Common myeloid progenitor, CD34-positive (primary cell): ENCODE measurements at regions of chr17 and their contacts with region 1.

Region 1: DNA sequence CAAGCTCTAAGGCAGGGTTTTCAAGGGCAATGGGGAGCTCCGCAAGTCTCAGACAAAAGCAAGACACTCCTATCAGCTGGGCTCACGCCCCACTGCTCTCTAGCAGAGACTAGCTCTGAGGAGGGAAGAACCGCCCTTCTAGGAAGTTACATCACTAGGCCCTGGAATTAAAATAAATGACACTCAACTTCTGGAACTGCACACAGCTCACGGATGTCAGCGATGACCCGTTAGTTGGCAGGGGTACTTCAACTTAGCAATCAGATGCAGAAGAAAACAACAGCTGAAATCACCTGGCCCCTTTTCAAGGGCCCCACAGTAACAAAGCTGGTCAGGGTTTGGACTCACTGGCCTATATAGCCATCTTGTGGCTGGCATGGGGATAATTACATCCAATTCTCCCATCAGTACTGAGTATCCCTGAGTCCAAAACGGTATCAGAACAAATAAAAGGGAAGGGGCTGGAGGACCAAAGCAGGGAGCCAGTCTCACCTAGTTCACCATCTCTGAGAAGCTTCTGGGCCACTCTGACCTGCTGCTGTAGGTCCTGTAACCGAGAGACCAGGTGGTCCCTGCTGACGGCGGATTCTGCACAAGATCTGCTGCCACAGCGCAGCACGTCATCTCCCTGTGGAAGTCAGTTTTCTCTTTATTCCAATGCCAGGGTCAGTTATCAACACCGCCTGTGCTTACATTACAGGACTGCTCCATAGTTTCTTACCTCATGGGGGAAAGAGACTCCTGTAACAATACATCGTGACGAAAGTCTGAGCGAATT is 22.2 kb downstream of the SERPINF1 start:
- DNase-seq: peak; percentile 64 to 77 (median 74)
- H3K4me3 ChIP-seq: peak overlapping the region in 1 of 7 experiments; percentile 10
- H3K27ac ChIP-seq: peak overlapping the region in 1 of 2 experiments; percentile 14
- H3K4me1 ChIP-seq: peaks cover 5 to 34% (median 13%) of the 10 kb centered on the region in 4 experiments
- H3K27me3 ChIP-seq: no peaks in the 10 kb centered on the region

Region 2: GRCh38 chr17:1673041-1673785 is 110.8 kb before region 1 on chr17:
- CTCF ChIA-PET with region 1: interaction called, 20 read pairs
- POLR2A ChIA-PET with region 1: interaction called, 3 read pairs
- DNase-seq: no peak
- H3K4me3 ChIP-seq: no peak overlapping the region
- H3K27ac ChIP-seq: no peak overlapping the region
- H3K4me1 ChIP-seq: no peaks in the 10 kb centered on the region
- H3K27me3 ChIP-seq: no peaks in the 10 kb centered on the region

Region 3: GRCh38 chr17:1684378-1685189 is 99.4 kb before region 1 on chr17 and contains the start of gene PRPF8:
- CTCF ChIA-PET with region 1: interaction called, 14 read pairs
- POLR2A ChIA-PET with region 1: interaction called, 4 read pairs
- DNase-seq: peak; percentile 97 to 99 (median 98)
- H3K4me3 ChIP-seq: peak within 1 kb of the TSS; percentile 79 to 94 (median 91)
- H3K27ac ChIP-seq: peak within 1 kb of the TSS; percentile 80 to 94
- H3K4me1 ChIP-seq: peaks cover 0 to 13% (median 10%) of the 10 kb centered on the region in 4 experiments
- H3K27me3 ChIP-seq: no peaks in the 10 kb centered on the region

Region 4: GRCh38 chr17:1716076-1716995 is 67.7 kb before region 1 on chr17:
- CTCF ChIA-PET with region 1: interaction called, 231 read pairs
- POLR2A ChIA-PET with region 1: interaction called, 15 read pairs
- DNase-seq: peak; percentile 100
- H3K4me3 ChIP-seq: peak overlapping the region; percentile 72 to 95 (median 80)
- H3K27ac ChIP-seq: peak overlapping the region; percentile 98 to 99
- H3K4me1 ChIP-seq: peaks cover 0 to 53% (median 45%) of the 10 kb centered on the region in 4 experiments
- H3K27me3 ChIP-seq: no peaks in the 10 kb centered on the region

Region 5: GRCh38 chr17:1752425-1753262 is 31.4 kb before region 1 on chr17:
- CTCF ChIA-PET with region 1: interaction called, 41 read pairs
- POLR2A ChIA-PET with region 1: no interaction called
- DNase-seq: peak; percentile 35 to 77 (median 67)
- H3K4me3 ChIP-seq: peak overlapping the region in 5 of 7 experiments; percentile 23 to 67 (median 31)
- H3K27ac ChIP-seq: no peak overlapping the region
- H3K4me1 ChIP-seq: peaks cover 0 to 23% (median 13%) of the 10 kb centered on the region in 4 experiments
- H3K27me3 ChIP-seq: no peaks in the 10 kb centered on the region

Region 6: GRCh38 chr17:1764284-1764683 is 19.7 kb before region 1 on chr17:
- CTCF ChIA-PET with region 1: interaction called, 11 read pairs
- POLR2A ChIA-PET with region 1: interaction called, 3 read pairs
- DNase-seq: peak; percentile 55 to 93 (median 89)
- H3K4me3 ChIP-seq: peak overlapping the region in 2 of 7 experiments; percentile 16 to 19
- H3K27ac ChIP-seq: peak overlapping the region in 1 of 2 experiments; percentile 53
- H3K4me1 ChIP-seq: peaks cover 7 to 41% (median 28%) of the 10 kb centered on the region in 4 experiments
- H3K27me3 ChIP-seq: no peaks in the 10 kb centered on the region

Region 7: GRCh38 chr17:1773696-1774181 is 10.3 kb before region 1 on chr17:
- CTCF ChIA-PET with region 1: interaction called, 35 read pairs
- POLR2A ChIA-PET with region 1: interaction called, 3 read pairs
- DNase-seq: peak in 1 of 3 donors; percentile 49
- H3K4me3 ChIP-seq: no peak overlapping the region
- H3K27ac ChIP-seq: peak overlapping the region in 1 of 2 experiments; percentile 14
- H3K4me1 ChIP-seq: peaks cover 7 to 29% (median 25%) of the 10 kb centered on the region in 4 experiments
- H3K27me3 ChIP-seq: no peaks in the 10 kb centered on the region